Activated CD8-positive, alpha-beta T cell treated with anti-CD3 and anti-CD28 coated beads for 36 hours (primary cell): ENCODE measurements at regions of chr16 and their contacts with region 1.

Region 1: GRCh38 chr16:30526823-30527635 is 663 bp upstream of the ZNF768 start:
- DNase-seq: peak; percentile 98
- ATAC-seq: peak; percentile 92
- H3K4me3 Mint-ChIP-seq: peak overlapping the region; percentile 74
- H3K27ac Mint-ChIP-seq: peak overlapping the region; percentile 67
- H3K4me1 Mint-ChIP-seq: peaks cover 33% of the 10 kb centered on the region
- H3K27me3 Mint-ChIP-seq: no peaks in the 10 kb centered on the region
- CTCF ChIP-seq: no peak

Region 2: DNA sequence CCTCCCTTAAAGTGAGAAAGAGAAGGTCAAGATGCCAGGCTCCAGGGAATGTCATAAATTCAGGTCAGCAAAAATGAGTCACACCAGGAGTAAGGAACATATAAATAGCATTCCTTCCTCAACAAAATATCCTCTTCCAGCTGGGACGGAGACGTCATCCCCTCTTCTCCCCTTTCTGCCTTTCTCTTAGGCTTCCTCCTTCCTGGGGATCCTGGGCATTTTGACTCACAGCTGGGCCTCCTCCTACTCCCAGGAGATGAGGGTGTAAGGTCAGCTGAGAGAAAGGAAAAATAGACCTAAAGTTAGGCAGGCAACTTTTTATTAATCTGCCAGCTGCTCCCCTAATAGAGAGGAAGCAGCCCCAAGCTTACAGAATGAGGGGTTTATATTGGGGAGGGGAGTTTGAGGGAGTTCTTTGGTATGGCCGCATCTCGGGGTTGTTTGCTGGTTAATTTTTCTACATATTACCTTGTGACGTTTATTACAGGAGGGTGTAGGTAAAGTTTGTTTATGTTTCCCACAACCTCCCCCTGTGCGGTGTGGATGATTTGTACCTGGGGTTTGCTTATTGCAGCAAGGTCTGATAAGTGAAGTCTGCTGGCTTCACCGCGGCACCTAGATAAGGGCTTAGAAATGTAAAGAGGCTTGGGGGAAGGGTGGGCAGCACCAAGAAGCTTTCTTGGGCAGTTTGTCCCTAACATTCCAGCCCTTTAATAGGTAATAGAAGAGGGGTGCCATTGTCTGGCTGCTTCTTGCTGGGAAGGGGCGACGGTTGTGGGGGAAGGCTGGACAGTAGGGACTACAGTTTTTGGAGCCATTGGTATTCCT is 14.7 kb after region 1 on chr16:
- CTCF ChIA-PET with region 1: no interaction called
- POLR2A ChIA-PET with region 1: no interaction called
- intact Hi-C with region 1: no loop called
- DNase-seq: no peak
- ATAC-seq: no peak
- H3K4me3 Mint-ChIP-seq: no peak overlapping the region
- H3K27ac Mint-ChIP-seq: no peak overlapping the region
- H3K4me1 Mint-ChIP-seq: peaks cover 13% of the 10 kb centered on the region
- H3K27me3 Mint-ChIP-seq: no peaks in the 10 kb centered on the region
- CTCF ChIP-seq: no peak

Region 3: DNA sequence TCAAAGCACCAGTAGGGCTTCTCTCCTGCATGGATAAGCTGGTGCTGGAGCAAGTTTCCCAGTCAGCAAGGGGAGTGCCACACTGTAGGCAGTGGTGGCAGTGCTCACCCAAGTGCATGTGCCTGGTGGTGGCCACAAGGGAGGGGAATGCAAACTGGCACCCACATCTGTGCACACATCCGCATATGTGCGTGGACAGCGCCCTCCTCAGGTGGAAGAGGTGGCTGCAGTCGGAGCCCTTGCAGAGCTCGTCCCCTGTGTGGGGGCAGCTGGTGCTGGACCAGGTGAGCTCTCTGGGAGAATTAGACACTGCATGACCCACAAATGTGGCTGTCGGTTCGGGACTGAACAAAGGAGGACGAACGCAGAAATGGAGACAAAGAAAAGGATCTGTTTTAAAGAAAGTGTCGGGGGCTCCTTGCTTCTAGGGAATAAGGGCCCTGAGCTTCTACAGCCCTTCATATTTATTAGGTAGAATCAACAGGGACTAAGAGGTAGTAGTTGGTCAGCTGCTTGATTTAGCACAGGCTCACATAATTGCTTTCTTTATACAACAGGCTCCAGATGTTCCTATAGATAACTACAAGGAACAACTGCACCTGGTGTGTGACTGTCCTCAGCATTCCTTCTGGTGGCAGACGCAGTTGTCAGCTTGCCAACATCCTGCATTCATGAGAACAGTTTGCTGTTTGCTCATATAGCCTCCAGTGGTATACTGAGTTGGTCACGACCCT is 88.5 kb after region 1 on chr16:
- CTCF ChIA-PET with region 1: interaction called, 14 read pairs
- POLR2A ChIA-PET with region 1: interaction called, 5 read pairs
- intact Hi-C with region 1: no loop called
- DNase-seq: peak; percentile 94
- ATAC-seq: peak; percentile 90
- H3K4me3 Mint-ChIP-seq: no peak overlapping the region
- H3K27ac Mint-ChIP-seq: no peak overlapping the region
- H3K4me1 Mint-ChIP-seq: peaks cover 1% of the 10 kb centered on the region
- H3K27me3 Mint-ChIP-seq: no peaks in the 10 kb centered on the region
- CTCF ChIP-seq: peak; percentile 90

Region 4: DNA sequence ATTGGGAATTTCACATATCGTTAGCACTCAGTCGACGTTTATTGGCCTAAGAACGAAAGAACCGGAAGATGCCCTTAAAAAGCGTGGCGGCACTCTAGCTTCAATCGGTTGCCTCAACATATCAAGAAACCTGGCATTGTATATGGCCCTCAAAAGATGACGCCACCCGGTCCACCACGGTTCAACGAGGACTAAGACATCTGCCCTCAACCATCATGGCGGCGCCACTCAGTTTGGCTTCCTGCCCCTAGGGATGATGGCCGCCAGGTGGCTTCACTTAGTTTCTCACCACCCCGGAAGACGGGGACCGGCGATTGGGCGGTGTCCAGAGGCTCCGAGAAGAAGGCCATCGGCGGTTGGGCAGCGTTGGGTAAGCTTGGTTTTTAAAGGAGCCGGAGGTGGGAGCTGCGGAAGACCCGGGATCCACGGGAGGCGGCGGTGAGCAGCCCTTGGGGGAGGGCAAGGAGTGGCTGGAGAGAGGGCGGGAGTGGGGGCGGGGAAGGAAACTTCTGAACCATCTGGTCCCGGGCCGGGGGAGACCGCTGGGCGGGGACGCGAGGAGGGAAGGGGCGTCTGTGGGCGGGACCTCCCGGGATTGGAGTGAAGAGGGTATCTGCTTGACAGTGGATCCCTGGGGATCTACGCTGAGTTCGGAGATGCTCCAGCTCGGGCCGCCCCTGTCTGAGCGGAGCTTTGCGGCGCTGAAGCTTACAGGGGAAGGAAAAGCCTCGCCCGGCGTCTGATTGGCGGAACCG is 123.5 kb after region 1 on chr16 and contains the start of gene PRR14:
- CTCF ChIA-PET with region 1: no interaction called
- POLR2A ChIA-PET with region 1: no interaction called
- intact Hi-C with region 1: no loop called
- DNase-seq: peak; percentile 100
- ATAC-seq: peak; percentile 82
- H3K4me3 Mint-ChIP-seq: peak within 1 kb of the TSS; percentile 88
- H3K27ac Mint-ChIP-seq: peak within 1 kb of the TSS; percentile 91
- H3K4me1 Mint-ChIP-seq: peaks cover 27% of the 10 kb centered on the region
- H3K27me3 Mint-ChIP-seq: no peaks in the 10 kb centered on the region
- CTCF ChIP-seq: no peak
- total RNA-seq, gene PRR14: 74.0 to 76.6 TPM